Activated CD8-positive, alpha-beta memory T cell treated with anti-CD3 and anti-CD28 coated beads, Interleukin-2, amount 10 ng/mL, durations not matched to agents 7 days and 5 days (primary cell): ENCODE measurements at regions of chr17 and their contacts with region 1.

Region 1: DNA sequence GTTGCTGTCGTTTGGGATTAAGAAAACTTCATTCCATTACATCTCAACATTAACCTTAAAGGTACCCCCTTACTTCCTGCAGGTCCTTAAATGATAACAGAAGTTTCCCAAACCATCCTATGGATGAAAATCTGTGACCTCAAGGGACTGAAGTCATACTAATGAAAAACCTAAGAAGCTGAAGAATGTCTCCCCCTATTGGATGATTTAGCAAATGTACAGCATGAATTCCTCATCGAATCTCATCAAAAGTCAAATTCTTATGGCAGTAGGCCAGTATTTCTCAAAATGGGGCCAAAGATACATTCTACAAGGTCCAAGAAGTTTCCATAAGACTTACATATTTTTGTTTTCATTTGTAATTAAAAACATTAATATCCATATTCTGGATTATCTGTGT is 13.5 kb downstream of the SCO1 start:
- DNase-seq: no peak
- ATAC-seq: no peak
- H3K4me3 Mint-ChIP-seq: no peak overlapping the region
- H3K27ac Mint-ChIP-seq: no peak overlapping the region
- H3K4me1 Mint-ChIP-seq: peaks cover 5% of the 10 kb centered on the region
- H3K27me3 Mint-ChIP-seq: no peaks in the 10 kb centered on the region

Region 2: GRCh38 chr17:10697092-10698081 is 13.5 kb after region 1 on chr17 and contains the starts of genes ADPRM and SCO1:
- CTCF ChIA-PET with region 1: interaction called, 11 read pairs
- DNase-seq: peak; percentile 95
- ATAC-seq: peak; percentile 96
- H3K4me3 Mint-ChIP-seq: peak within 1 kb of the TSS; percentile 93
- H3K27ac Mint-ChIP-seq: peak within 1 kb of the TSS; percentile 94
- H3K4me1 Mint-ChIP-seq: peaks cover 54% of the 10 kb centered on the region
- H3K27me3 Mint-ChIP-seq: no peaks in the 10 kb centered on the region
- total RNA-seq, gene ADPRM: 9.9 to 10.6 TPM
- total RNA-seq, gene SCO1: 25.6 to 30.4 TPM